Heart left ventricle (tissue), 16 donors: ENCODE measurements at regions of chr6 and their contacts with region 1.

Region 1: GRCh38 chr6:81752138-81752920 is at the start of gene TENT5A:
- DNase-seq: peak; percentile 94 to 96 (median 96)
- ATAC-seq: peak; percentile 83 to 85 (median 84)
- H3K4me3 ChIP-seq: peak within 1 kb of the TSS; percentile 77 to 95 (median 86)
- H3K27ac ChIP-seq: peak within 1 kb of the TSS; percentile 93 to 99 (median 97)
- H3K4me1 ChIP-seq: peaks cover 0 to 36% (median 13%) of the 10 kb centered on the region in 12 donors
- H3K27me3 ChIP-seq: no peaks in the 10 kb centered on the region
- CTCF ChIP-seq: peak in 3 of 12 donors; percentile 22 to 37 (median 35)
- POLR2A ChIP-seq: peak; percentile 30 to 97
- total RNA-seq, gene TENT5A: 25.7 to 47.2 (median 41.4) TPM

Region 2: DNA sequence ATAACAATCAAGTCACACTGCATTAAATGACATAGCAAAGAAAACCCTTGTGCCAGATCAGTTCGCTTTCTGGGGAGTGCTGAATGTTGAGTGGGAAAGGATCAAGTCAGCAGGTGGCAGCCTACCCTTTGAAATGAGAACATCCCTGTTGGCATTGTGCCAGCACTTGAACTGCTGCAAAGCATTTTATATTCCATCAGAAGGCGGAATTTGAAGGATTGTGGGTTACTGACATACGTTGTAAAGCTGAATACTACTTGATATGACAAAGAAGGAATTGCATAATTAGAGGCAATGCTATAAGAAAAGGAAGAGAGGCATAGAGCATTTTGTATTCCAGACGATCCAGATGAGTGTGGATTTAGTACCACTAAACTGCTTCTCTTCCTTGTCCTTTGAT is 1619.3 kb before region 1 on chr6:
- intact Hi-C with region 1: loop called in 1 of 10 experiments (anchors 10 kb)
- DNase-seq: peak in 4 of 5 donors; percentile 43 to 64 (median 60)
- ATAC-seq: peak; percentile 18 to 78 (median 57)
- H3K4me3 ChIP-seq: no peak overlapping the region
- H3K27ac ChIP-seq: no peak overlapping the region
- H3K4me1 ChIP-seq: peaks cover 0 to 6% (median 0%) of the 10 kb centered on the region in 12 donors
- H3K27me3 ChIP-seq: no peaks in the 10 kb centered on the region
- CTCF ChIP-seq: peak in 11 of 12 donors; percentile 30 to 71 (median 58)
- POLR2A ChIP-seq: no peak

Region 3: DNA sequence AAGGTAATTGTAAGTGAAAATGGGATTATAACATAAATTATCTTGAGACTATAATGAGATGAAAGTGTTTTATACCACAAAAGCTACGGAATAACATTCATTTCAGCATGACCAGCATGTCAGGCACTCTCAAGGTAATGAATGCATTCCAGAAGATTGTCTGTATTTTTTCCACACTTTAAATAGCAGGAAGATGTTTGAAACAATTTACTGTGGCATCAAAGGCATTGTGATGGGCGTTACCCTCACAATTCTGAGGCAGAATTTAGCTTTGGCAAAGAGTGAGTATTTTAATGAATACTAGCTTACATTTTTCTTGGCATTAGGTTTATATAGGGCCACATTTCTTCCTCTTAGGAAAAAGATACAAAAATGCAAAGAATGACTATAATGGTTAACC is 1018.7 kb before region 1 on chr6:
- intact Hi-C with region 1: loop called in 1 of 10 experiments (anchors 10 kb)
- DNase-seq: no peak
- ATAC-seq: no peak
- H3K4me3 ChIP-seq: no peak overlapping the region
- H3K27ac ChIP-seq: no peak overlapping the region
- H3K4me1 ChIP-seq: no peaks in the 10 kb centered on the region
- H3K27me3 ChIP-seq: no peaks in the 10 kb centered on the region
- CTCF ChIP-seq: no peak
- POLR2A ChIP-seq: no peak

Region 4: GRCh38 chr6:81515562-81516453 is 236.5 kb before region 1 on chr6:
- intact Hi-C with region 1: loop called in 1 of 10 experiments (anchors 5 kb)
- DNase-seq: peak in 3 of 5 donors; percentile 18 to 37 (median 30)
- ATAC-seq: peak; percentile 55 to 91 (median 86)
- H3K4me3 ChIP-seq: peak overlapping the region in 1 of 12 donors; percentile 4
- H3K27ac ChIP-seq: peak overlapping the region in 5 of 12 donors; percentile 1 to 35 (median 10)
- H3K4me1 ChIP-seq: peaks cover 0 to 11% (median 0%) of the 10 kb centered on the region in 12 donors
- H3K27me3 ChIP-seq: no peaks in the 10 kb centered on the region
- CTCF ChIP-seq: no peak
- POLR2A ChIP-seq: no peak

Region 5: GRCh38 chr6:81696482-81696881 is 55.8 kb before region 1 on chr6:
- intact Hi-C with region 1: loop called in 2 of 10 experiments (anchors 5 to 10 kb)
- DNase-seq: no peak
- ATAC-seq: peak in 2 of 4 donors; percentile 39 to 59
- H3K4me3 ChIP-seq: no peak overlapping the region
- H3K27ac ChIP-seq: peak overlapping the region in 3 of 12 donors; percentile 8 to 44 (median 14)
- H3K4me1 ChIP-seq: peaks cover 0 to 33% (median 5%) of the 10 kb centered on the region in 12 donors
- H3K27me3 ChIP-seq: no peaks in the 10 kb centered on the region
- CTCF ChIP-seq: no peak
- POLR2A ChIP-seq: no peak

Region 6: GRCh38 chr6:81734085-81734484 is 18.2 kb before region 1 on chr6:
- intact Hi-C with region 1: no loop called
- DNase-seq: no peak
- ATAC-seq: no peak
- H3K4me3 ChIP-seq: no peak overlapping the region
- H3K27ac ChIP-seq: no peak overlapping the region
- H3K4me1 ChIP-seq: peaks cover 0 to 28% (median 7%) of the 10 kb centered on the region in 12 donors
- H3K27me3 ChIP-seq: no peaks in the 10 kb centered on the region
- CTCF ChIP-seq: peak in 2 of 12 donors; percentile 9 to 25
- POLR2A ChIP-seq: no peak

Region 7: GRCh38 chr6:81981812-81982211 is 229.5 kb after region 1 on chr6:
- intact Hi-C with region 1: loop called in 1 of 10 experiments (anchors 5 kb)
- DNase-seq: no peak
- ATAC-seq: peak in 1 of 4 donors; percentile 34
- H3K4me3 ChIP-seq: no peak overlapping the region
- H3K27ac ChIP-seq: peak overlapping the region in 1 of 12 donors; percentile 12
- H3K4me1 ChIP-seq: peaks cover 0 to 7% (median 0%) of the 10 kb centered on the region in 12 donors
- H3K27me3 ChIP-seq: no peaks in the 10 kb centered on the region
- CTCF ChIP-seq: no peak
- POLR2A ChIP-seq: no peak

Region 8: GRCh38 chr6:82178077-82178758 is 425.9 kb after region 1 on chr6:
- intact Hi-C with region 1: loop called in 8 of 10 experiments (anchors 2 to 10 kb)
- DNase-seq: no peak
- ATAC-seq: peak; percentile 55 to 87 (median 85)
- H3K4me3 ChIP-seq: no peak overlapping the region
- H3K27ac ChIP-seq: no peak overlapping the region
- H3K4me1 ChIP-seq: peaks cover 0 to 8% (median 0%) of the 10 kb centered on the region in 12 donors
- H3K27me3 ChIP-seq: no peaks in the 10 kb centered on the region
- CTCF ChIP-seq: peak; percentile 34 to 80 (median 63)
- POLR2A ChIP-seq: no peak